ENCODE measurements at regions of chr22 and their contacts with region 1.

Region 1: GRCh38 chr22:37633625-37634416 is 5.6 kb upstream of the SH3BP1 start:
- DNase-seq: peak; percentile 48
- H3K4me3 Mint-ChIP-seq: peak overlapping the region; percentile 72
- H3K27ac Mint-ChIP-seq: peak overlapping the region; percentile 88
- H3K4me1 Mint-ChIP-seq: peaks cover 62% of the 10 kb centered on the region
- H3K27me3 Mint-ChIP-seq: no peaks in the 10 kb centered on the region

Region 2: DNA sequence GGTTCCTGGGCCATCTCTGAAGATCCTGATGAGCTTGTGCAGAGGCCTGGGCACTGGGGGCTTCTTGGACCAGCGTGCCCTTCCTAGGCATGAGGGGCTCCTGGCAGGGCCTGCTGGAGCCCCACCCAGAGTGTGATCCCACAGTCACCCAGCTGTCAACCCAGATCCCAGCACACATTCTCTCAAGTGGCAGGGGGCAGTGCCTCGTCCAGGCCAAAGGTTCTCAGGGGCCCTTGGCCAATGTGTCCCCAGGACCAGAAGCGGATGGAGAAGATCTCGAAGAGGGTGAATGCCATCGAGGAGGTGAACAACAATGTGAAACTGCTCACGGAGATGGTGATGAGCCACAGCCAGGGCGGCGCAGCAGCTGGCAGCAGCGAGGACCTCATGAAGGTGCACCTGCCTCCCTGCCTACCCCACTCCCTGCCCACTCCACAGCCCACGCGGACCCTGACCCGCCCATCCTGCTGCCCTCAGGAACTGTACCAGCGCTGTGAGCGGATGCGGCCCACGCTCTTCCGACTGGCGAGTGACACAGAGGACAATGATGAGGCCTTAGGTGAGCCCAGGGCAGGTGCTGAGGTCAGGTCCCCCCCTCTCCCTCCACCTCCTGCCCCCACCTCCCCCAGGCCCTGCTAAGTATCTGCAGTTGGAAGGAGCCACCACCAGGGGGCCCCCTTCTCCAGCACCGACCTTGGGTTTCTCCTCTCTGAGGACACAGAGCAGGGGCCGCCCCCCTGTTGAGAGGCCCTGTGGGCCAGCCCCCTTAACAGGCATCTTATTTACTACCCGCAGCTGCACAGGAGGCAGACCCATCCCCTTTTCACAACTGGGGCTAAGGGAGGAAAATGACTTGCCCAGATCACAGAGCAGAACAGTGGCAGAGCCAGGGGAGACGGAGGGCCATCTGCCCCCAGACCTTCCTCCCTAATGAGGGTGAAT is 10.5 kb before region 1 on chr22:
- intact Hi-C with region 1: loop called (anchors 1 kb)
- DNase-seq: peak; percentile 58
- H3K4me3 Mint-ChIP-seq: peak overlapping the region; percentile 37
- H3K27ac Mint-ChIP-seq: peak overlapping the region; percentile 70
- H3K4me1 Mint-ChIP-seq: peaks cover 37% of the 10 kb centered on the region
- H3K27me3 Mint-ChIP-seq: no peaks in the 10 kb centered on the region

Region 3: GRCh38 chr22:37686002-37686982 is 52.5 kb after region 1 on chr22 and contains the start of gene NOL12:
- intact Hi-C with region 1: no loop called
- DNase-seq: peak; percentile 74
- H3K4me3 Mint-ChIP-seq: peak within 1 kb of the TSS; percentile 96
- H3K27ac Mint-ChIP-seq: peak within 1 kb of the TSS; percentile 97
- H3K4me1 Mint-ChIP-seq: peaks cover 24% of the 10 kb centered on the region
- H3K27me3 Mint-ChIP-seq: no peaks in the 10 kb centered on the region
- total RNA-seq, gene NOL12: 67.8 and 70.0 TPM in 2 replicates